PC-9 (cell line): ENCODE measurements at regions of chr10 and their contacts with region 1.

Region 1: GRCh38 chr10:50336140-50336539 is 84.8 kb upstream of the ASAH2 start:
- DNase-seq: no peak
- H3K4me3 ChIP-seq: no peak overlapping the region
- H3K27ac ChIP-seq: no peak overlapping the region
- H3K4me1 ChIP-seq: no peaks in the 10 kb centered on the region
- H3K27me3 ChIP-seq: no peaks in the 10 kb centered on the region
- CTCF ChIP-seq: no peak

Region 2: GRCh38 chr10:50375051-50375452 is 38.9 kb after region 1 on chr10:
- CTCF ChIA-PET with region 1: interaction called, 5 read pairs
- POLR2A ChIA-PET with region 1: interaction called, 10 read pairs
- intact Hi-C with region 1: no loop called
- DNase-seq: peak; percentile 51 to 98
- H3K4me3 ChIP-seq: no peak overlapping the region
- H3K27ac ChIP-seq: peak overlapping the region; percentile 85
- H3K4me1 ChIP-seq: peaks cover 37% of the 10 kb centered on the region
- H3K27me3 ChIP-seq: no peaks in the 10 kb centered on the region
- CTCF ChIP-seq: no peak

Region 3: GRCh38 chr10:50653142-50653541 is 317.0 kb after region 1 on chr10:
- CTCF ChIA-PET with region 1: no interaction called
- POLR2A ChIA-PET with region 1: no interaction called
- intact Hi-C with region 1: no loop called
- DNase-seq: no peak
- H3K4me3 ChIP-seq: no peak overlapping the region
- H3K27ac ChIP-seq: no peak overlapping the region
- H3K4me1 ChIP-seq: no peaks in the 10 kb centered on the region
- H3K27me3 ChIP-seq: no peaks in the 10 kb centered on the region
- CTCF ChIP-seq: peak; percentile 43; the same call in 1 of the 2 replicates